AG04449 (cell line): ENCODE measurements at regions of chr1 and their contacts with region 1.

Region 1: DNA sequence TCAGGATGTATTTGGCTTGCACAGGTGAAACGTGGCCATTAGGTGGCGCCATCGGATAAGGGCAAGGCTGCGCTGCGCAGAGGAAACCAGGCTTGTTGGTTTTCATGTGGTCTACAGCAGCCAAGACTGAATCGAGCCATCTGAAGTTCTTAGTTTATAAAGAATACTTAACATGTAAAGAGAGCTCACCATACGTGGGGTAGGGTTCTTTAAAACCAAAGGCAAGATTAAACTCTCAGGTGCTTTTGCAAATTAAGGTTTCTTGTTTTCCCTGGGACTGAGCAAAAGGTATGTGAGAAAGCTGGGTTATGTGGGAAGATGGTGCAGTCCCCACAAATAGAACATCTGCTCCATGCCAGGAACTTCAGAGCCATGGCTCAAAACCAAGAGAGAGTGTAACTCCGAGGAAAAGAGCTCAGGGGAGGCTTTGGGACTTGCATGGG is 9.3 kb downstream of the MASP2 start:
- DNase-seq: peak; percentile 45
- H3K4me3 ChIP-seq: no peak overlapping the region
- CTCF ChIP-seq: peak; percentile 92

Region 2: GRCh38 chr1:10960411-10961299 is 77.1 kb before region 1 on chr1:
- CTCF ChIA-PET with region 1: no interaction called
- POLR2A ChIA-PET with region 1: no interaction called
- DNase-seq: no peak
- H3K4me3 ChIP-seq: no peak overlapping the region
- CTCF ChIP-seq: peak; percentile 93

Region 3: DNA sequence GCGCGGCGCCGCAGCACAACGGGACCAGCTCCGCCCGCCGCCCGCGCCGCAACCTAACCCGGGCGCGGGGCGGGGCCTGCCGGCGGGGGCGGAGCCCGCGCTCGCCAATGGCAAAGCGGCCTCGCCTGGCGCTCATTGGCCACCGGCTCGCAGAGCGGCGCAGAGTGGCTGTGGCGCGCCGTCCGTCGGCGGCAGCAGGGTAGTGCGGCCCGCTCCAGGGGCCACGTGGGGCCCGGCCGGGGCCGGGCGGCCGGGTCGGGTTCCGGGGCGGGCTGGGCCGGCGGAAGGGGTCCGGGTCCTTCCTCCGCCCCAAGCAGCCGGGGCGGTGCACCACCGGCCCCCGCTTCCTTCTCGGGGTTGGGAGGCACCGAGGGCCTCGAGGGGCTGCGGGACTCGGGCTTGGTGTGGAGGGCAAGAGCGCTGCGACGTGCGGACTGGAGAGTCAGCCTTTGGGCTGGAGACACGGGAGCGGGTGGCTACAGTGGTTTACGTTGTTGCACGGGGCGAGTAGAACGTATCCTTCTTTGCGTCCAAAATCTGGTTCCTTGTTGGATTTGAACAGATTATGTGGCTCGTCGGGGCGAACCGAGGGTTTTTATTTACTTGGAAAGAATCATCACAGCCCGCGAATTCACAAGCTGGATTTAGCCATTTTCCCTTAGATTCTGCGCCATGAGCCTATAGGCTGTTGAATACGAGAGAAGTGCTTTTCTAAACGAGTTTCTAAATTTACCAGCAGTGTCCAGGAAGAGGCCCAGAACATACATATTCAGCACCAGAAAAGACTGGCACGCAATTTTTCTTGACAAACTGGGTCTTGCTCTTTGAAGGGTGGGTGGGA is 22.4 kb after region 1 on chr1 and contains the start of gene SRM:
- CTCF ChIA-PET with region 1: interaction called, 161 read pairs
- POLR2A ChIA-PET with region 1: no interaction called
- DNase-seq: no peak
- H3K4me3 ChIP-seq: peak within 1 kb of the TSS; percentile 86
- CTCF ChIP-seq: peak; percentile 69

Region 4: GRCh38 chr1:11158720-11159321 is 121.1 kb after region 1 on chr1:
- CTCF ChIA-PET with region 1: interaction called, 13 read pairs
- POLR2A ChIA-PET with region 1: no interaction called
- DNase-seq: peak; percentile 93
- H3K4me3 ChIP-seq: no peak overlapping the region
- CTCF ChIP-seq: no peak

Region 5: DNA sequence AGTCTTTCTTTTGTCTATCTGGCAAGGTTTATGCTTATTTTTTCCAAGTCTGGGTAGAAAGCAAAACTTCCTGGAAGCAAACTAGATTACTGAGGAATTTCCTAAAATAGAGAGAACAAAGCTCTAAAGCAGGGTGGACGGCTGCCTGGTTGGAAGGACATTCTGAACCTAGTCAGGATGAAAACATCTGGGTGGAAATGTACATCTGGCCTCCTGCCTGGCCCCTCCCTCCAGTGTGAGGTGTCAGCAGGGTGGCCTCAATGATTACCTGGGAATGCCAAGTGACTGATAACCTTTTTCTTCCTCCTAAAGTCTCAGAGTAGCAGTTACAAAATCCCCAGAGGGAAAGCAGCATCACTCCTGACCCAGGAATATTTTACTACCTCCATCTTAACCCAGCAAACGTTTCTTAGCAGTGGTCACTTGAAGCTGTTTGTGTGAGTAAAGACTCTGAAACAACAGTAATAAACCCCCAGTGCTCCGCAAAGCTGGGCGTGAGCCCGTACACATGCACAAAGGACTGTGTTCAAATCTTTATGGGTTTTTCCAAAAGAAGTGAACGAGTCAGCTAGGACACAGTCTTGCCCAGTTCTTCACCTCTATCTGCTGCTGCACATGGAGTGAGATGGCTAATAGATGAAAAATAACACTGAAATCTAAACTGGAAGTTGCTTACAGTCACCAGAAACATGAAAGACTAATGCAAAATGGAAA is 170.3 kb after region 1 on chr1:
- CTCF ChIA-PET with region 1: interaction called, 10 read pairs
- POLR2A ChIA-PET with region 1: no interaction called
- DNase-seq: no peak
- H3K4me3 ChIP-seq: no peak overlapping the region
- CTCF ChIP-seq: no peak

Region 6: DNA sequence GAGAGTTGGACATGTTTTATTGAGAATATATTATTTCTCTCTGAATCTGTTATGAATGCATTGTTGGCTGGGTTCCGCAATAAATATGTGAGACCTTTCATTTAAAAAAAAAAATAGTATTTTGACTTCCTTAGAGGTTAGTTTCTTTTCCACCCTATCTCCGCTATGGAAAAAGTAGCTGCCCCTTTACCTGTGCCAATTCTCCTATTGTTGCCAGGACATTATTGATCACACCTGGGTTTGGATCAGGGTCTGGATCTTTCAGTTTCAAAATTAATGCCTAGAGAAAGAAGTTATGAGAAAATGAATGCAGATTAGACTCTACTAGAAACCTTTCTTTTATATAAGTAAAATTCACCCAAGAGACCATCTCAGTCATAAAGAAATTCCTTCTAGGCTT is 195.4 kb after region 1 on chr1:
- CTCF ChIA-PET with region 1: interaction called, 17 read pairs
- POLR2A ChIA-PET with region 1: no interaction called
- DNase-seq: no peak
- H3K4me3 ChIP-seq: no peak overlapping the region
- CTCF ChIP-seq: no peak

Region 7: GRCh38 chr1:11293856-11294255 is 256.1 kb after region 1 on chr1:
- CTCF ChIA-PET with region 1: no interaction called
- POLR2A ChIA-PET with region 1: no interaction called
- DNase-seq: no peak
- H3K4me3 ChIP-seq: no peak overlapping the region
- CTCF ChIP-seq: no peak

Region 8: DNA sequence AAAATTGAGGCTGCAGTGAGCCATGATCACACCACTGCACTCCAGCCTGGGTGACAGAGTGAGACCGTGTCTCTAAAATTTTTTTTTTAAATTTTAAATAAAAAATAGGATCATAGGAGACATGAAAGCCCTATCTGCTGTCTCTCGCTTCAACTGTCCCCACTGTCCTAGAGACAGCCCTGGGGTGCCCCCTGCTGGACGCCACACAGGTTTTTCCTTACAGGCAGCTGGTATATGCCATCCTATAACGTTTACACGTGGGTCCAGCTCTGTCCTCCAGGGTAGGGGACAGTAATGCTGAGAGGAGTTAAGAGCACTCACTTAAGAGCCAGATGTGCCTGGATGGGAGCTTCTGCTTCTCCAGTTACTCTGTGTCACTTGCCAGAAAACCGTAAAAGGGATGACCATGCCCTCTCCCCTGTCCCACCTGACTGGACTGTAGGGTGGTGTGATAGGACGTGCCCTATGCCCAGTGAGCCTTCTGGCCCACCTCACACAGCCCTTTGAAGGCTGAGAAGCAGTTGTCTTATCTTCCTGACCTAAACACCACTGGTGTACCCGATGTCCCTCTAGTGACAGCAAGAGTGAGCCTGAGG is 608.0 kb after region 1 on chr1:
- CTCF ChIA-PET with region 1: interaction called, 311 read pairs
- POLR2A ChIA-PET with region 1: no interaction called
- DNase-seq: no peak
- H3K4me3 ChIP-seq: no peak overlapping the region
- CTCF ChIP-seq: peak; percentile 80